Left cardiac atrium (tissue), 4 donors: ENCODE measurements at regions of chr7 and their contacts with region 1.

Region 1: DNA sequence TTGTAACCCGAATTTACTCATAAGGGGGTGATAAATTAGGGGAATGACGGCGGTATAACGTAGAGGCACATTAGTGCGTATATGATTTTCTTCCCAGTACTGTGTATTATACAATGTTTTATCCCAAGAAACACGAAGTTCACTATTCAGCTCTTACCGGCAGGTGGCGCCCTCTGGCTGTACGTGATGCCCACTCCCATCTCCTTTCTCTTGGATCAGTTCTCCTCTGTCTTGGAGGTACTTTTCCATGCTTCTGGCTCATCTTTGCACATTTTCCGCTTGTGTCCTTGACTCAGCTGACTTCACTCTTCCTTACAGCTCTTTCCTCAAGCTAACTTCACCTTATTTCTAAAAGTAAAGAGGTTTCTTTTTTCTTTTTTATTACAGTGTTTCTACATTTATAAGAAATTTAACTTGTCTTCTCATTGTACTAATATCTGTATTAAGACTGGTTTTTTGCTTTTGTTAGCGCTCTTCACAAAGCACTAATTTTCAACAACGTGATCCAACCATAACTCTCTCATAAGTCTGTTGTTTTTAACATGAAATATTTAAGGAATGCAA is 21.3 kb downstream of the TMEM176B start:
- DNase-seq: peak; percentile 87
- ATAC-seq: peak; percentile 88 to 95

Region 2: DNA sequence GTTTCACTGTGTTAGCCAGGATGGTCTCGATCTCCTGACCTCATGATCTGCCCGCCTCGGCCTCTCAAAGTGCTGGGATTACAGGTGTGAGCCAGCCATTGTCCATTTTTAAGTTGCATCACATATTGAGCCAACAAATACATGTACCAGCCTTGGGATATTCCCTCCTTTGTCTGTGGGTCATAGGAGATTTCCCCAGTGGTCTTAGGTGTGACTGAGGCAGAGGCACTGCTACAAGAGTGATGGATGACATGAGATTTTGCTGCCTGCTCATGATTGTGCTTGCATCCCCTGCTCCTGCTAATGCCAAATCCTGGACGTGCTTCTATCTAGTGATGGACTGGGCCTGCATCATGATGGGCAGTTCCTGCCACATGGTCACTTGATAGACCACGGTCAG is 135.9 kb before region 1 on chr7:
- intact Hi-C with region 1: no loop called
- DNase-seq: no peak
- ATAC-seq: no peak

Region 3: DNA sequence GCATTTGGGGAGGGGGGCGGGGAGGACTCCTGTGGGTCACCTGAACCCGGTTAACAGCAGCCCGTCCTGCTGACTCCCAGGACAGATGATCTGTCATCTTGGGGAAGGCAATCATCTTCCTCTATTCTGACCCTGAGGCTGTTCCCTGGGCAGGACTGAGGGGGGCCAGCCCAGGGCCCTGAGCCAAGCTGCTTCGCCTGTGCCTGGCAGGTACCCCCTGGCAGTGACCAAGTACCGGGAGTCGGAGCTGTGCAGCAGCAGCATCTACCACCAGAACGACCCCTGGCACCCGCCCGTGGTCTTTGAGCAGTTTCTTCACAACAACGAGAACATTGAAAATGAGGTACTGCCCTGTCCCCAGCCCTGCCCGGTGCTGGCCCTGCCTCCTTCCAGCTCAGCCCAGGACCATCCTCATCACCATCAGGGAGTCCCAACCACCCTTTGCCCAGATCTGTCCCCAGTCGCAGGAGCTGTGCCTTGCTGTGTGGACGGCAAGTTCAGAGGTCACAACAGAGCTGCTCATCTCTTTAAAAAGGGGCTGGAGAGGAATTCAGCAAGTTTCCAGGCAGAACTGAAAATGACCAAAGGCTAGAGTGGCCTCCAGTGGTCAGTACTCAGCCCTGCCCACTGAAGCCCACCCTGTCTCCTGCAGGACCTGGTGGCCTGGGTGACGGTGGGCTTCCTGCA is 81.6 kb after region 1 on chr7:
- intact Hi-C with region 1: loop called in 1 of 2 experiments (anchors 5 kb)
- DNase-seq: no peak
- ATAC-seq: peak; percentile 43 to 59

Region 4: GRCh38 chr7:150876817-150877526 is 98.2 kb after region 1 on chr7:
- intact Hi-C with region 1: loop called (anchors 2 to 5 kb)
- DNase-seq: peak; percentile 62
- ATAC-seq: peak; percentile 91 to 92

Region 5: DNA sequence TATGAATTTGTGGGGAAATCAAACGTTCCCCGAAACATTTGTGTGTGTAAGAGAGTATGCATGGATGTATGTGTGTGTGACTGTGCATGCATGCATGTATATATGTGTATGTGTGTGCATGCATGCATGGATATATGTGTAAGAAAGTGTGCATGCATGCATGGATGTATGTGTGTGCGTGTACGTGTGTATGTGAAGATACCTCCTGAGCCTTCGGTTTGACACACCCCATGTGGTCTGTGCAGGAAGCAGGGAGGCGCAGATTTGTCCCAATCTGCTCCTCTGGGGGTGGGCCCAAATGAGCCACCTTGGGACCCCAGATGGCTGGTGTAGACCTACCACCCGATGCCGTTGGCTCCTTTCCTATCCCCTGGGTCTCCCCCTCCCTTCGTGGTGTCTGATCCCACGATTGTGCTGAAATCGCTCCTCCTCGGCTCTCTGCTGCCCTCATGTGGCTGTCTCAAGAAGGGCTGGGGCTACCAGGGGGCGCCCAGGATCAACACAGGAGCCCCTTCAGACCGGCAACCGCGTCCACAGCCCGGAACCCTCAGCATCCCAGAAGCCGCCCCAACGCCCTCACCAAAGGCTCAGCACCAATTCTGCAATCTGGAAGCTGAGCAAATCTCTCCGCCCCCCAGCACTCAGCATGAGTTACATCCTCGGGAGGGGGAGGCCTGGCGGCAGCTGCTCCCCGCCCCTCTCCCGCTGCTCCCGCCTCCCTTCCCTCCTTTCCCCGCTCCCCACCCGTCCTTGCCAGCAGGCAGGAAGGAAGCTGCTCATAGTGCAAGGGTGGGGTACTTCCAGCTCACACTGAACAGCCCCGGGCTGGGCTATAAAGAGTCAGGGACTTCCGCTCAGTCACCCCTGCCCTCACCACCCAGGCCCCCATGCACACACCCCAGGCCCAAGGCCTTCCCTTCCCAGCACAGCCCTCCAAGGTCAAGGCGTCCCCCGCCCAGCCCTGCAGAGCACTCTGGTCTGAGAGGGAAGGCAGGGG is 209.7 kb after region 1 on chr7:
- intact Hi-C with region 1: loop called in 1 of 2 experiments (anchors 5 kb)
- DNase-seq: peak; percentile 86
- ATAC-seq: peak; percentile 56 to 60